B cell (primary cell): ENCODE measurements at regions of chr16 and their contacts with region 1.

Region 1: GRCh38 chr16:75519881-75520280 is 16.0 kb downstream of the CHST5 start:
- DNase-seq: no peak
- ATAC-seq: no peak
- H3K4me3 ChIP-seq: no peak overlapping the region
- H3K4me3 Mint-ChIP-seq: no peak overlapping the region
- H3K27ac ChIP-seq: no peak overlapping the region
- H3K27ac Mint-ChIP-seq: no peak overlapping the region
- H3K4me1 ChIP-seq: peaks cover 0 to 13% of the 10 kb centered on the region in 2 donors
- H3K4me1 Mint-ChIP-seq: peaks cover 12% of the 10 kb centered on the region
- H3K27me3 ChIP-seq: no peaks in the 10 kb centered on the region
- H3K27me3 Mint-ChIP-seq: no peaks in the 10 kb centered on the region
- CTCF ChIP-seq: no peak

Region 2: GRCh38 chr16:75148311-75149195 is 371.3 kb before region 1 on chr16 and contains the start of gene ZFP1:
- CTCF ChIA-PET with region 1: no interaction called
- POLR2A ChIA-PET with region 1: no interaction called
- intact Hi-C with region 1: loop called (anchors 2 kb)
- DNase-seq: peak; percentile 95
- ATAC-seq: peak; percentile 86
- H3K4me3 ChIP-seq: peak within 1 kb of the TSS; percentile 54 to 97 (median 95)
- H3K4me3 Mint-ChIP-seq: peak within 1 kb of the TSS; percentile 89
- H3K27ac ChIP-seq: peak within 1 kb of the TSS; percentile 86 to 90
- H3K27ac Mint-ChIP-seq: peak within 1 kb of the TSS; percentile 90
- H3K4me1 ChIP-seq: peaks cover 5 to 7% of the 10 kb centered on the region in 2 donors
- H3K4me1 Mint-ChIP-seq: peaks cover 20% of the 10 kb centered on the region
- H3K27me3 ChIP-seq: peaks cover 0 to 2% (median 0%) of the 10 kb centered on the region in 4 experiments
- H3K27me3 Mint-ChIP-seq: no peaks in the 10 kb centered on the region
- CTCF ChIP-seq: no peak
- total RNA-seq, gene ZFP1: 13.4 and 14.1 TPM in 2 replicates

Region 3: DNA sequence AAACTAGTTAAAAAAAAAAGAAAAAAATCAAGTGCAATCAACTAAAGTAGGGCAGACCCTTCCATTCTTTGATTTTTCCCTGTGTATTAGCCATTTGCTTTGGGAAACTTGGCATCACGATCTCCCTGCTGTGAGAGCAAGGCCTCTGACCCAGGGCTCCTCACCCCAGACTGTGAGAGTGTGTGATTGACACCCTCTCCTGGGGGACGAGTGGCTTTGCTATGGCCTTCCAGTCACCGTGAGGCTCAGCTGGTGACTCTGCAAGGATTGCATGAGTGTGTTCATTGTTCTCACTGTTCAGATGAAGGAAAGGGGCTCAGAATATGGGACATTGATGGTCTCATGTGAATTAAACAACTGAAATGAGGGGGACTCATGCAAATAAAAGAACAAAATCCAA is 199.4 kb before region 1 on chr16:
- CTCF ChIA-PET with region 1: no interaction called
- POLR2A ChIA-PET with region 1: no interaction called
- intact Hi-C with region 1: no loop called
- DNase-seq: no peak
- ATAC-seq: no peak
- H3K4me3 ChIP-seq: no peak overlapping the region
- H3K4me3 Mint-ChIP-seq: peak overlapping the region; percentile 47
- H3K27ac ChIP-seq: no peak overlapping the region
- H3K27ac Mint-ChIP-seq: no peak overlapping the region
- H3K4me1 ChIP-seq: peaks cover 14 to 15% of the 10 kb centered on the region in 2 donors
- H3K4me1 Mint-ChIP-seq: peaks cover 23% of the 10 kb centered on the region
- H3K27me3 ChIP-seq: peaks cover 0 to 60% (median 31%) of the 10 kb centered on the region in 4 experiments
- H3K27me3 Mint-ChIP-seq: peaks cover 40% of the 10 kb centered on the region
- CTCF ChIP-seq: no peak

Region 4: DNA sequence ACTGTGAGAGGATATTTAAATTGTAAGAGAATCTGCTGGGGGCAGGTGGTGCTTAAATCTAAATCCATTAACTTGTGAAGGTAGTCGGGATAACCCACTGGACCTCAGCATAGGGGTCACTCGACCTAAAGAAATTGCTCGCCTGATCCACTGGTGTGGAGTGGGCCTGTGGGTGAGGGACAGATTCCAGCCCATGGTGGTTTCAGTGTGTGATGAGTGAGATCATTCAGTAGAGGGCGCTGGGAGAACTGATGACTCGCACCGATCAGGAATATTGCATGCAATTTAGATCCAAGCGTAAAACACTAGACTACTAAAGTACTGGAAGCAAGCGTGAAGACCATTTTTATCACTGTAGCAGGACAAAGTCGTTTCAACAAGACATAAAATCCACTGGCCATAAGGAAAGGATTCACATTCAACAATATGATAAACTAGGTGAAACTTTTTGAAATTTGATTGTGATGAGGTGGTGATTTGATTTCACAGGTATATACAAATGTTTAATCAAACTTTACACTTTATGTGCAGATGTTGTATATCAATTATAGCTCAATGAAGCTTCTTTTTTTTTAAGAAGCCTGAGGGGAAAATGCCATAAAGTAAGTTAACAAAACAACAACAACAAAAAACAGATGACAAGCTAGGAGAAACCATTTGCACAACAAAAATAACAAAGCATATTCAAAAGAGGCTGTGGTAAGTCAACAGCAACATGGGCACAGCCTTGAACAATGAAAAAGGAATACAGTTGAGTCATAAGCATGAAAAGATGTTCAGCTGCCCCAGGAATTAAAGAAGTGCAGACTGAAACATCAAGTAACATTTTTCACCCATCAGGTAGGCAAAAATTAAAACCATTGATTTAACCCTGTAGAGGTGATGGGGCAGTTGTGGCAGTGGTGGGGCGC is 47.9 kb before region 1 on chr16:
- CTCF ChIA-PET with region 1: interaction called, 15 read pairs
- POLR2A ChIA-PET with region 1: interaction called, 3 read pairs
- intact Hi-C with region 1: loop called (anchors 1 kb)
- DNase-seq: peak; percentile 61
- ATAC-seq: peak; percentile 87
- H3K4me3 ChIP-seq: no peak overlapping the region
- H3K4me3 Mint-ChIP-seq: no peak overlapping the region
- H3K27ac ChIP-seq: no peak overlapping the region
- H3K27ac Mint-ChIP-seq: no peak overlapping the region
- H3K4me1 ChIP-seq: peaks cover 0 to 8% of the 10 kb centered on the region in 2 donors
- H3K4me1 Mint-ChIP-seq: peaks cover 2% of the 10 kb centered on the region
- H3K27me3 ChIP-seq: no peaks in the 10 kb centered on the region
- H3K27me3 Mint-ChIP-seq: no peaks in the 10 kb centered on the region
- CTCF ChIP-seq: peak; percentile 78

Region 5: GRCh38 chr16:75550211-75550662 is 30.4 kb after region 1 on chr16:
- CTCF ChIA-PET with region 1: interaction called, 4 read pairs
- POLR2A ChIA-PET with region 1: no interaction called
- intact Hi-C with region 1: loop called (anchors 1 kb)
- DNase-seq: peak; percentile 74
- ATAC-seq: peak; percentile 80
- H3K4me3 ChIP-seq: no peak overlapping the region
- H3K4me3 Mint-ChIP-seq: no peak overlapping the region
- H3K27ac ChIP-seq: no peak overlapping the region
- H3K27ac Mint-ChIP-seq: no peak overlapping the region
- H3K4me1 ChIP-seq: peaks cover 8 to 13% of the 10 kb centered on the region in 2 donors
- H3K4me1 Mint-ChIP-seq: peaks cover 12% of the 10 kb centered on the region
- H3K27me3 ChIP-seq: peaks cover 0 to 6% (median 0%) of the 10 kb centered on the region in 4 experiments
- H3K27me3 Mint-ChIP-seq: no peaks in the 10 kb centered on the region
- CTCF ChIP-seq: no peak

Region 6: DNA sequence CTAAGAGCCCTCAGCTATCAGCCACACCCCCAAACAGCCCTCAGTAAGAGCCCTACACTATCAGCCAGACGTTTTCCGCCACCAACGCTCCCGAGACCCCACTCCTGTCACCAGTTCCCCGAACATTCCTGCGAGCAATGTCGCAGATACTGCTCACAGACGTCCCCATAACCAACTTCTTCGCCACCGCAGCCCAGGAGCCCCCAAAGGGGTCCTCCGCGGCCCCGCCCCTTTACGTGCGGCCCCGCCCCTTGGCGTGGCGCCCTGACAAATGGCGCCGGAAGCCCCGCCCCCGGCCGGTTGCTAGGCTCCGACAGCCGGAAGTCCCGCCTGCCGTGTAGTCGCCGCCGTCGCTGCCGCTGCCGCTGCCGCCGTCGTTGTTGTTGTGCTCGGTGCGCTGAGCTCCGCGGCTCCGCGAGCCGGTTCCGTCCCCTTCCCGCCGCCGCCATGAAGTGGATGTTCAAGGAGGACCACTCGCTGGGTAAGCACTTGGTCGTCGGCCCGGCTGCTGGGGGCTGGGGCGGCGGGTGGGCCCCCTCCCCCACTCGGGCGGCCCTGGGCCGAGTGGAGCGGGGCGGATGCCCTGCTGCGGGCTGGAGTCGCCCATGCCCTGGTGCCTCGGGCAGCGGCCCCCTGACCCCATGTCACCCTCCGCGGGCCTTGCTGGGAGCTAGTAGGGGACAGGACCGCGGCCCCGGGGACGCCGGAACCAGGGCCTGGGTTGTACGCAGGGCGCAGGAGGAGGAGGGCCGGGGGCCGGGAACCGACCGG is 46.3 kb after region 1 on chr16 and contains the start of gene GABARAPL2:
- CTCF ChIA-PET with region 1: interaction called, 8 read pairs
- POLR2A ChIA-PET with region 1: interaction called, 3 read pairs
- intact Hi-C with region 1: loop called (anchors 1 kb)
- DNase-seq: peak; percentile 97
- ATAC-seq: peak; percentile 70
- H3K4me3 ChIP-seq: peak within 1 kb of the TSS; percentile 75 to 96 (median 95)
- H3K4me3 Mint-ChIP-seq: peak within 1 kb of the TSS; percentile 100
- H3K27ac ChIP-seq: peak within 1 kb of the TSS; percentile 96 to 99
- H3K27ac Mint-ChIP-seq: peak within 1 kb of the TSS; percentile 97
- H3K4me1 ChIP-seq: peaks cover 44 to 61% of the 10 kb centered on the region in 2 donors
- H3K4me1 Mint-ChIP-seq: peaks cover 53% of the 10 kb centered on the region
- H3K27me3 ChIP-seq: no peaks in the 10 kb centered on the region
- H3K27me3 Mint-ChIP-seq: no peaks in the 10 kb centered on the region
- CTCF ChIP-seq: no peak
- total RNA-seq, gene GABARAPL2: 84.8 and 84.9 TPM in 2 replicates

Region 7: GRCh38 chr16:75593825-75594820 is 74.2 kb after region 1 on chr16:
- CTCF ChIA-PET with region 1: no interaction called
- POLR2A ChIA-PET with region 1: no interaction called
- intact Hi-C with region 1: no loop called
- DNase-seq: no peak
- ATAC-seq: no peak
- H3K4me3 ChIP-seq: no peak overlapping the region
- H3K4me3 Mint-ChIP-seq: no peak overlapping the region
- H3K27ac ChIP-seq: no peak overlapping the region
- H3K27ac Mint-ChIP-seq: no peak overlapping the region
- H3K4me1 ChIP-seq: no peaks in the 10 kb centered on the region
- H3K4me1 Mint-ChIP-seq: no peaks in the 10 kb centered on the region
- H3K27me3 ChIP-seq: no peaks in the 10 kb centered on the region
- H3K27me3 Mint-ChIP-seq: no peaks in the 10 kb centered on the region
- CTCF ChIP-seq: no peak

Region 8: DNA sequence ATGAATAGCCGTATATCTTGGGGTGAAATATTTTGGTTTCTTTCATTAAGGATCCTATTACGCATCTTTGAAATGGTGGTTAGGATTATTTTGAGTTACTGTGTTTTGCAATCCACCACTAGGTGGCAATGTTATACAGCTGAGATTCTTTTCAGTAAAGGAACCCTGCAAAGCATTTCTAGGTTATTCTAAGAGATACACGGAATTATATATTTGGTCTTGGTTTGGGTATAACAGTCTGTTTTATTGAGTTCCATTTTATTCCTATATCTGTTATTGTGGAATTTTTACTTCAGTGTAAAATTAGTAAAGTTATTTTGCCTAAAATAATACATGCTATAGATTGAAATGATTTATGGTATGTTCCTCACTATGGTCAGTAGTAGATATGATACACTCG is 269.4 kb after region 1 on chr16:
- CTCF ChIA-PET with region 1: no interaction called
- POLR2A ChIA-PET with region 1: no interaction called
- intact Hi-C with region 1: no loop called
- DNase-seq: peak; percentile 60
- ATAC-seq: no peak
- H3K4me3 ChIP-seq: no peak overlapping the region
- H3K4me3 Mint-ChIP-seq: no peak overlapping the region
- H3K27ac ChIP-seq: no peak overlapping the region
- H3K27ac Mint-ChIP-seq: no peak overlapping the region
- H3K4me1 ChIP-seq: no peaks in the 10 kb centered on the region
- H3K4me1 Mint-ChIP-seq: no peaks in the 10 kb centered on the region
- H3K27me3 ChIP-seq: peaks cover 0 to 15% (median 3%) of the 10 kb centered on the region in 4 experiments
- H3K27me3 Mint-ChIP-seq: peaks cover 31% of the 10 kb centered on the region
- CTCF ChIP-seq: peak; percentile 94

Region 9: GRCh38 chr16:77190478-77191258 is 1670.8 kb after region 1 on chr16 and contains the start of gene MON1B:
- CTCF ChIA-PET with region 1: interaction called, 3 read pairs
- POLR2A ChIA-PET with region 1: no interaction called
- intact Hi-C with region 1: loop called (anchors 2 kb)
- DNase-seq: peak; percentile 98
- ATAC-seq: peak; percentile 97
- H3K4me3 ChIP-seq: peak within 1 kb of the TSS; percentile 74 to 98 (median 91)
- H3K4me3 Mint-ChIP-seq: peak within 1 kb of the TSS; percentile 92
- H3K27ac ChIP-seq: peak within 1 kb of the TSS; percentile 94 to 98
- H3K27ac Mint-ChIP-seq: peak within 1 kb of the TSS; percentile 99
- H3K4me1 ChIP-seq: peaks cover 17 to 23% of the 10 kb centered on the region in 2 donors
- H3K4me1 Mint-ChIP-seq: peaks cover 40% of the 10 kb centered on the region
- H3K27me3 ChIP-seq: no peaks in the 10 kb centered on the region
- H3K27me3 Mint-ChIP-seq: peaks cover 4% of the 10 kb centered on the region
- CTCF ChIP-seq: no peak
- total RNA-seq, gene MON1B: 79.1 and 81.0 TPM in 2 replicates